Activated CD4-positive, alpha-beta T cell treated with anti-CD3 and anti-CD28 coated beads for 36 hours (primary cell): ENCODE measurements at regions of chr3 and their contacts with region 1.

Region 1: GRCh38 chr3:74387111-74387735 is 227.2 kb downstream of the CNTN3 start:
- DNase-seq: no peak
- ATAC-seq: no peak
- H3K4me3 Mint-ChIP-seq: no peak overlapping the region
- H3K27ac Mint-ChIP-seq: no peak overlapping the region
- H3K4me1 Mint-ChIP-seq: no peaks in the 10 kb centered on the region
- H3K27me3 Mint-ChIP-seq: no peaks in the 10 kb centered on the region

Region 2: DNA sequence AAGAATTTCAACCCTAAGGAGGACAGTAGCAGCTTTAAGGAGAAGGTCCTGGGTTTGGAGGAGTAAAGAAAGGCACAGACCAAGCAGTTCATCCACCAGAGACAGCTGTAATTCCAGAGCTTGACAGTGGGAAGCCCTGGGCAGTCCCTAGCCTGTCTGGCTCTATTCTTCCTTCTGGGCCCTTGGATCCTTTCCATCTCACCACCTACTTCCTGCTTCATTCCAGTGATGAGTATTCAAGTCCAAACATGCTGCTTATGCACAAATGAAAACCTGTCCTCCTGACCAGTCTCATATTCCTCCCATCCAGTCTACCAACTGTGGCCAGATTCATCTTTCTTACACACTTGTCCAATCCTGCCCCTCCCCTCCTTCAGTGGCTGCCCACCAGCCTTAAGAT is 55.9 kb after region 1 on chr3:
- CTCF ChIA-PET with region 1: no interaction called
- POLR2A ChIA-PET with region 1: no interaction called
- intact Hi-C with region 1: loop called in 1 of 2 experiments (anchors 10 kb)
- DNase-seq: no peak
- ATAC-seq: no peak
- H3K4me3 Mint-ChIP-seq: no peak overlapping the region
- H3K27ac Mint-ChIP-seq: no peak overlapping the region
- H3K4me1 Mint-ChIP-seq: no peaks in the 10 kb centered on the region
- H3K27me3 Mint-ChIP-seq: no peaks in the 10 kb centered on the region